AG04449 (cell line): ENCODE measurements at regions of chr3 and their contacts with region 1.

Region 1: GRCh38 chr3:149657926-149658733 is at the start of gene WWTR1:
- DNase-seq: peak; percentile 79
- H3K4me3 ChIP-seq: peak within 1 kb of the TSS; percentile 93
- CTCF ChIP-seq: peak; percentile 22

Region 2: GRCh38 chr3:149366941-149367840 is 290.9 kb before region 1 on chr3:
- CTCF ChIA-PET with region 1: no interaction called
- POLR2A ChIA-PET with region 1: no interaction called
- DNase-seq: no peak
- H3K4me3 ChIP-seq: no peak overlapping the region
- CTCF ChIP-seq: no peak

Region 3: GRCh38 chr3:149566292-149566975 is 91.7 kb before region 1 on chr3:
- CTCF ChIA-PET with region 1: interaction called, 14 read pairs
- POLR2A ChIA-PET with region 1: interaction called, 3 read pairs
- DNase-seq: no peak
- H3K4me3 ChIP-seq: no peak overlapping the region
- CTCF ChIP-seq: no peak

Region 4: GRCh38 chr3:149621218-149622005 is 36.7 kb before region 1 on chr3:
- CTCF ChIA-PET with region 1: no interaction called
- POLR2A ChIA-PET with region 1: interaction called, 12 read pairs
- DNase-seq: peak; percentile 78
- H3K4me3 ChIP-seq: no peak overlapping the region
- CTCF ChIP-seq: no peak

Region 5: DNA sequence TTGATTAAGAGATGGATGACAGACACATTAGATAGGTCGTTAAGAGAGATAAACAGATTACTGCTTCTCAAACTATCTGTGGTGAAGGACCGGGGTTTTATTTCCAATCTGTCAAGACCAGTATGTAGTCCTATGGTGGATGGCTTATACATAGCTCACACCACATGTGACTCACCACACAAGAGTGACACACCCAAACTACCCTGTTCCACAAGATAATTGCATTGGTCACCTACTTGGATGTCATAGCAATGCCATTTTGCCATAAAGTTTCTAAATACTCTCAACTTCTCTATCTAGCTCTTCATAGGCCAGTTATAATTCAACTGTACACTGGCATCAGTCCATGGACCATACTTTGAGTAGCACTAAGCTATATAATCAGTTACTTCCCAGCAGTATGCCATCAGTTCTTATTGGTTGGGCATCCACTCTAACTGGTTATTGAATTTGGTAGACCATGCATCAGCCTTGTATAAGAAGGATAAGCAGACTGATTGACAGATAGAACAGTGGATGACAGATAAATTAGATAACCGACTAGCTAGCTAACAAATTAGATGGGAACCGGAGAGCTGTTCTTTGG is 11.9 kb before region 1 on chr3:
- CTCF ChIA-PET with region 1: interaction called, 6 read pairs
- POLR2A ChIA-PET with region 1: interaction called, 20 read pairs
- DNase-seq: no peak
- H3K4me3 ChIP-seq: no peak overlapping the region
- CTCF ChIP-seq: no peak

Region 6: GRCh38 chr3:149702691-149703441 is 44.7 kb after region 1 on chr3:
- CTCF ChIA-PET with region 1: interaction called, 3 read pairs
- POLR2A ChIA-PET with region 1: interaction called, 17 read pairs
- DNase-seq: peak; percentile 82
- H3K4me3 ChIP-seq: no peak overlapping the region
- CTCF ChIP-seq: no peak